ENCODE measurements at regions of chr9 and their contacts with region 1.

Region 1: DNA sequence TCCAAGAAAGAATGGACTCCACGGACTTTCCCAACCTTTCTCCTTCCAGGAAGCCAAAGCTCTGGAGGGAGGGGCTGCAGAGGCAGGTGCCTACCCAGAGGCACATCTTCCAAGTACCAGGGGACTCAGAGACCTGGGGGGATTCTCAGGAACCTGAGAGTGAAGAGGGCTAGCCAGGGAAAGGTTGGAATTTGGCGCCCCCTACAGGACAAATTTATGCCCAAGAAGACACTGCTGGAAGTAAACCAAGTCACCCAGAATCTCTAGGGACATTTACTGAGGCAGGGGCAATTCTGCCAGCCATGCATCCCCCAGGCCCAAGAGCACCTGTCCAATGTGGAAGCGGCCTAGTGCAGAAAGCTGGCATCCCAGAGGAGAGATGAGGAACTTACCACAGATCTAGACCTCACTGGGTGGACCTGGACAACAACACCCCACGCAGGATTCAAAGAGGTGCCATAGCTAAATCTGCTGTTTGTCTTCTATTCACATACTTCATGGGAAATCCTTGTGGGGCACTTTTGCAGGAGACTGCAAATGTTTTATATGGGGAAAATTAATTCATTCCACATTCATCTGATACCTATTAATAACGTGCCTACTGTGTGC is 25.9 kb upstream of the IDNK start:
- DNase-seq: no peak
- ATAC-seq: peak; percentile 92
- H3K4me3 ChIP-seq: no peak overlapping the region
- H3K27ac ChIP-seq: no peak overlapping the region
- H3K4me1 ChIP-seq: no peaks in the 10 kb centered on the region
- H3K27me3 ChIP-seq: no peaks in the 10 kb centered on the region
- CTCF ChIP-seq: peak; percentile 69 to 78 (median 71)
- EP300 ChIP-seq: no peak
- POLR2A ChIP-seq: no peak
- RAD21 ChIP-seq: peak; percentile 70

Region 2: GRCh38 chr9:83199243-83199642 is 397.8 kb before region 1 on chr9:
- CTCF ChIA-PET with region 1: no interaction called
- POLR2A ChIA-PET with region 1: no interaction called
- RAD21 ChIA-PET with region 1: no interaction called
- SMC1A ChIA-PET with region 1: no interaction called
- in situ Hi-C with region 1: no loop called
- intact Hi-C with region 1: loop called (anchors 10 kb)
- DNase-seq: no peak
- ATAC-seq: peak; percentile 74
- H3K4me3 ChIP-seq: no peak overlapping the region
- H3K27ac ChIP-seq: no peak overlapping the region
- H3K4me1 ChIP-seq: no peaks in the 10 kb centered on the region
- H3K27me3 ChIP-seq: no peaks in the 10 kb centered on the region; a peak in 1 of 4 replicates
- CTCF ChIP-seq: peak; percentile 19 to 48 (median 36); a peak in 4 of 6 replicates
- EP300 ChIP-seq: no peak
- POLR2A ChIP-seq: no peak
- RAD21 ChIP-seq: peak; percentile 43

Measured in GM12878 (cell line).